ENCODE measurements at regions of chr22 and their contacts with region 1.

Region 1: DNA sequence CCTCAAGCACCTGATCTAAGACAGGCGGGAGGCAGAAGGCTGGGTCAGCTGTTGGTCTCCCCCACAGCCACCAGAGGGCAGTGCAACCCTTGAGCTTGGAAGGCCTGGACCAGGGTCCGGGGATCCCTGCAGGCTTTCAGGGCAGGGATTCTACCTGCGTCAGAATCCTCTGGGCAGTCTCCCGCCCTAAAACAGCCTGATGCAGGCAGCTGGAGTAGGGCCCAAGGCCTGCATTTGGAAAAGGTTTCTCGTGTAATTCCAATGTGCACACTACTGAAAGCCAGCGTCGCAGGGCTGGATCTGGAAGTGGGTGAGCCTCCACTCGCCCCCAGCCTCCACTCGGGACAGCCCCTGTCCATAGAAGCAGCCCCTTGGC is 31.8 kb downstream of the BID start:
- DNase-seq: no peak
- H3K4me3 ChIP-seq: no peak overlapping the region
- H3K27me3 ChIP-seq: no peaks in the 10 kb centered on the region
- CTCF ChIP-seq: peak; percentile 88

Region 2: DNA sequence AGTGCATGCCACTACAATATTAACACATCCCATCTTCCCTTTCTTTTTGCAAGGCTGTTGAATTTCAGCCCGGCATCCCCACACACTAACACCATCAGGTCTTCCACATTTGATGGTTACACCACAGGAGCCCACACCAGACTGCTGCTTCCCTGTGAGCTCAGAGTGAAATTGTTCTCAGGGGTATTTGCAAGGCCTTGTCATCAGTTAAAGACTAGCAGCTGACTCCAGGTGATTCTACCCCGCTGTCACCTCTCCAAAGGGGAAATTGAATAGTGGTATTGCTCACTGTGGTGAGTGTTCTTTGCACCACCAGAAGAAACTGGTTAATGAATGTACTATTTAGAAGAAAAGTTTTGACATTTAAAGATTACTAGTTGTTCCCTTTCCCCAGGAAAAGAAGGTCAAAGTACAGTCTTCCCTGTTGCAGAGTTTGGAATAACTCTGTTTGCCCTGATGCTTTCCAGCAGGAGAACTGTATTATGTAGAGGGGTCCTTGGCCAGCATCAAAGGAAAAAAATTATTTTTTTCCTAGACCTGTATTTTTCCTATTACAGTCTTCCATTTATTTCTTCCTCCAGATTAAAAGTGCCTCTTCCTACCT is 10.2 kb before region 1 on chr22:
- CTCF ChIA-PET with region 1: interaction called, 15 read pairs
- POLR2A ChIA-PET with region 1: no interaction called
- DNase-seq: no peak
- H3K4me3 ChIP-seq: no peak overlapping the region
- H3K27me3 ChIP-seq: no peaks in the 10 kb centered on the region
- CTCF ChIP-seq: no peak

Region 3: DNA sequence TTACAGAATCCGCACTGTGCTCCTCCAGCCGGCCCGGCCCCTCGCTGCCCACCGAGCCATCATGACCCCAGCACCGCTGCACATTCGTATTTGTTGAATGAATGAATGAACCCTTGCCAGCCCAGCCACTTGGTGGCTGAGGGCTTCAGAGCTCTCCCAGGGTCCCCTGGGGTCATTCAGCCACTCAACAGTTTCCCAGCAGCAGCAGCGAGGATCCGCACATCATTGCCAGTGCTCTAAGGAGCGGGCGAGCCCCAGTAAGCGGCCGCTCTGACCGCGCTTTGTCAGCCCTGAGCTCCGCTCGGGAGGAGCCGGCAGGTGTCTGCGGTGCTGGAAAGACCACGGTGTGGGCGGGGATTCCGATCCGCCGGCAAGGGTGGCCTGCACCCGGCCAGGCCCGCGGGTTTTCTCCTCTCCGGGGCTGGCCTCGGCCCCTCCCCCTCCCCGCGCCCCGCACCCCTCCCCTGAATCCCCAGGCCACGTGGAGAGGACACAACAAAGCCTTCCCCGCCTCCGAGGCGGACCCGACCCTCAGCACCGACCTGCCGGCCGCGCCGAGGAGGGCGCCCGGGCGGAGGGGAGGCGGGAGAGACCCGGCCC is 31.2 kb after region 1 on chr22:
- CTCF ChIA-PET with region 1: interaction called, 28 read pairs
- POLR2A ChIA-PET with region 1: no interaction called
- DNase-seq: no peak
- H3K4me3 ChIP-seq: peak overlapping the region; percentile 72
- H3K27me3 ChIP-seq: no peaks in the 10 kb centered on the region
- CTCF ChIP-seq: no peak

Region 4: DNA sequence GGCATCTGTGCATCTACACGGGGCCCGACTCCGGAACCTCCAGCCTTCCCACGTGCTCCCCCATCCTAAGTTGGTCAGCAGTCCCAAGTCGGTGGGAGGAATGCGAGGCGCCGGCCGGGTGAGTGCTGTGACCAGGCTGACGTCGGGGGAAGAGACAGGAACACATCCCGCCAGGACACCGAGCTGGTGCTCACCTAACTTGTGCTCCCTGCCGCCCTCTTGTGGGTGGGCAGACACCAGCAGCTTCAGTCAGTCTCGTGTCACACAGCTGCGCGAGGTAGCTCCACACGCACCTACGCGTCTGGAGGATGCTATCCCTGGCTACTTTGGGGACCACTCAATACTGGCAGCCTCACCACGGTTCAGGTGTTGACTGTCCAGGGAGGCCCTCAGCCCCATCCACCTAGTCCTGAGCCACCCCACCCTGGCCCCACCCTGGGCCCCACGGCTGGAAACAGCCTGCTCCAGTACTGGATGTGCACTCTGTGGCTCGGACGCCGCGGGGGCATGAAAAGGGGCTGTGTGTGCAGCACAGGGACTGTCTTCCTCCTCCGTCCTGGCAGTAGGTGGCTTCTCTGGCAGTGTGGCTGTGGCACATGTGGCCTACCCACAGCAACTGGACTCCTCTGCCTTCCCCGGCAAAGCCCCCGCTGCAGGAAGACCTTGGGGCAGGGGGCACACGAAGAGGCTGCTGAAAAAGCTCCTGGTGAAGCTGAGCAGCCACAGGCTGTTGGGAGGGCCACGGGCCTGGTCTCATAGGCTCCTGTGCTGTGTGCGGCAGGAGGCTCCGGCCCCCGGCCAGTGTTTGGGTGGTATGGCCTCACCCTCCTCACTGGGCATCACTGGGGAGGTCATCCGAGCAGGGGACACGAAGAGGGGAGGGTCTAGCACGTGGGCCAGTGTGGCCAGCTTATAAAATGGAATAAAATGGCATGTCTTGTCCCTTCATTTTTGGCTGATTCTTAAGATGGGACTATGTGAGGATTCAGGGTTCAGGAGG is 43.0 kb after region 1 on chr22:
- CTCF ChIA-PET with region 1: interaction called, 50 read pairs
- POLR2A ChIA-PET with region 1: no interaction called
- DNase-seq: no peak
- H3K4me3 ChIP-seq: no peak overlapping the region
- H3K27me3 ChIP-seq: no peaks in the 10 kb centered on the region
- CTCF ChIP-seq: peak; percentile 66

Measured in BJ (cell line).